ENCODE measurements at regions of chrX and their contacts with region 1.

Region 1: DNA sequence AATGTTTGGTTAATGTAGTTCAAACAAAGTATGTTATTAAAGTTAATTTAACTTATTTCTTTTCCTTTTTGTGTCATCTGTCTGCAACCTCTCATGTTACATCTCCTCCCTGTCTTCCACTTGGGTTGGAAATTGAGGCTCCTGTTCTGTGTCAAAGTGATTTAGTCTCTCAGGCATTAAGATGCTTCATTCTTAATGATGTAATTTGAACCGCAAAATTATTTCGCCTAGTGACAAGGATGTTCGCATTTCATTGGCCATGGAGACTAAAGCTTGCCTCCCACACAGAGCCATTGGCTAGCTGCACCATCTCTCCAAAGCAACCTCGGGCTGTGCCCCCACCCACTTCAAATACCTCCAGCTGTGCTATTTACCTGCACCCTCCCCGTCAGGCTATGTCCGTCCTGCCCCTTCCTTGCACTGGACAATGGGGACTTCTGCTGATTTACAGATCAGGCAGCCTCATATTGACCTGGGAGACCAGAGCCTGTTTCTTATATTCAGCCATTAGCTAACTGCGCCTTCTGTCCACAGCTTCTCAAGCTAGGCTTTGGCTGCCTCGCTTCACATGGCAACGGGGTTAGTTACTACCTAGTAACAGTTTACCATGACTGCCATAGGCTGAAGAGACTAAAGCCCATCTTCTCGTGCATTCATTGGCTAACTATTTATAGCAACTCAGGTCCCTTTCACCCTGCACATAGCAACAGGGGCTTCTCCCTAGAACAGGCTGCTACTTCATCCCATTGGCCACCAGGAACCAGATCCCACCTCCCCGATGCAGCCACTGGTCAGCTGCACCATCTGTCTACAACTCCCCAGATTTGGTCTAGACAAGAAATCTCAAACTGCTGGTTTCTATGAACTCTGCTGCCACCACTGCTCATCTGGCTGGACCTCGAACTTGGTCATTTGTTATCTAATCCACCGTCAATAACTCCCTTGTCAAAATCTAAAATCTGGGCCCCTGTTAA is 8.6 kb upstream of the ZNF157 start:
- DNase-seq: peak; percentile 87 to 88
- H3K4me3 ChIP-seq: peak overlapping the region in 1 of 3 donors; percentile 12
- H3K27ac ChIP-seq: peak overlapping the region; percentile 80 to 96 (median 85)
- H3K4me1 ChIP-seq: no peaks in the 10 kb centered on the region
- H3K27me3 ChIP-seq: no peaks in the 10 kb centered on the region
- CTCF ChIP-seq: peak in 3 of 6 experiments; percentile 32 to 48 (median 45)
- POLR2A ChIP-seq: peak in 1 of 2 donors; percentile 56

Region 2: DNA sequence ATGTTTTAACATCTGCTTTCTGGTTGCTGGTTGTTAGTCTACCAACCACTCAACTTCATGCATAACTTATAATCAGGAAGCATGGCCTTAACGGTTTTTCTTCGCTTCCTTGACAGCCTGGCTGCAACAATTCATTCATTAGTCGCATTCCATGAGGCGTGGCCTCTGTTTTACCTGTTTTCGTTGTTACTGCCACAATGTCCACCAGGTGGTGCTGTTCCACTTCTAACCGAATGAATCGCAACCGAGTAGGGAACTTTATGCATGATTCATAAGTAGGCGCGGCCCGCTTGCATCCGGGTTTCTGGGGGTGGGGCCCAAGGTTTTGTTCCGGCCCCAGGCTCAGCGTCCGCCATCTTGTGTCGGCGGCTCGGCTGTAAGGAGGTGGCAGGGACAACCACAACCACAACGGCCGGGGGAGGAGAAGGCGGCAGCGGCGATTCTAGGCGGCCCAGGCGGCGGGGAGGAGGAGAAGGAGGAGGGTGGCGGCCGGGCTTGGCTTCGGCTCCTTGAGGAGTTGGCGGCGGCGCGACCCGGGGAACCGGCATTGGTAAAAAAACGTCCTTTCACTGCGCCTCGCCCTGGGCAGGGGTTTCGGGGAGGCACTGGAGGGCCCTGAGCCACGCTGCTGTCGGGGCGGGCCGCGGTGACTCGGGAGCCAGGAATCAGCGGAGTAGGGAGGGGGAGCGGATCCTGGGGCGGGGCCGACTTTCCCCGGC is 168.2 kb before region 1 on chrX and contains the start of gene UBA1:
- intact Hi-C with region 1: no loop called
- DNase-seq: peak; percentile 92 to 94
- H3K4me3 ChIP-seq: peak within 1 kb of the TSS in 2 of 3 donors; percentile 29 to 85
- H3K27ac ChIP-seq: peak within 1 kb of the TSS; percentile 90 to 97 (median 93)
- H3K4me1 ChIP-seq: peaks cover 43 to 52% of the 10 kb centered on the region in 2 donors
- H3K27me3 ChIP-seq: no peaks in the 10 kb centered on the region
- CTCF ChIP-seq: peak; percentile 30 to 96 (median 68)
- POLR2A ChIP-seq: peak; percentile 45 to 90
- total RNA-seq, gene UBA1: 159 to 293 (median 201) TPM

Region 3: DNA sequence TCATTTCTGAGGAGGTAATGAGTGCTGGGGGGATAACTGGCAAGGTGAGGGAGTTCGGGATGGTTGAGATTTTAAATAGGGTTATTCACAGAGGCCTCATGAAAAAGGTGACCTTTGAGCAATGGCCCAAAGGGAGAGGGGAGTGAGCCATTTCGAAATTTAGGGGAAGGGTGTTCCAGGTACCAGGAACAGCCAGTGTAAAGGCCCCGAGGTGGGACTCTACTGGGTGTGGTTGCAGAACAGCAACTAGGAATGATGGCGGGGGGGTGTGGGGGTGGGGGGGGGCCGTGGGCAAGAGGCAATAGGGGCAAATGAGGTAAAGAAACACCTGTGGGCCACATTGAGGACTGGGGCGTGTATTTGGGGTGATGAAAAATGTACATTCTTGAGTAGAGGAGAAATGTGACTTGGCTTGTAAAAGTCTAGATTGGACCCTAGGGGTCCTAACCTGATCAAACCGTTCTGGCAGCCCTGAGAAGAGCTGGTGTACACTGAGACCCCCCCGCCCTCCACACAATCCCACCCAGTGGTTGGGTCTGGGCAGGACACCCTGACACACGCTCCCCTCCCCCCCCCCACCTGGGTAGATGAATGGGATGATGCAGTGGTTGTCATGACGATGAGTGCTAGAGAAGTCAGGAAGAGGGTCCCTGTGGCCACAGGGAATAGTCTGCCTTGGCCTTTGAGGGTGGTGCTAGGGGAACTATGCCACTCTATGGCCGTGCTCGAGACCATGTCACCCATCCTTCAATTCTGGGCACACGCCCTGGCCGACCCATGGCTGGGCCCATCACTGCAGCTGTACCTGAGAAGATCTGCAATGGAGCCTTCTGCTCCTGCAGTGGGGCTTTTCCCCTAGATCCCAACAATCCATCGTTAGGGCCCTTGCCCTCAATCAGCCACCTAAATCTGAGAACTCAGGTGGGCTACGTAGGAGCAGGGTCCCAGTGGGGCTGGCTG is 139.2 kb before region 1 on chrX:
- intact Hi-C with region 1: loop called (anchors 10 kb)
- DNase-seq: no peak
- H3K4me3 ChIP-seq: no peak overlapping the region
- H3K27ac ChIP-seq: no peak overlapping the region
- H3K4me1 ChIP-seq: peaks cover 0 to 13% of the 10 kb centered on the region in 2 donors
- H3K27me3 ChIP-seq: no peaks in the 10 kb centered on the region
- CTCF ChIP-seq: no peak
- POLR2A ChIP-seq: no peak

Measured in thyroid gland (tissue), 4 donors.